Activated CD8-positive, alpha-beta T cell treated with anti-CD3 and anti-CD28 coated beads for 36 hours (primary cell): ENCODE measurements at regions of chr3 and their contacts with region 1.

Region 1: GRCh38 chr3:184777336-184778004 is 34.5 kb upstream of the VPS8 start:
- DNase-seq: peak; percentile 96
- ATAC-seq: peak; percentile 99
- H3K4me3 Mint-ChIP-seq: no peak overlapping the region
- H3K27ac Mint-ChIP-seq: no peak overlapping the region
- H3K4me1 Mint-ChIP-seq: no peaks in the 10 kb centered on the region
- H3K27me3 Mint-ChIP-seq: peaks cover 15% of the 10 kb centered on the region
- CTCF ChIP-seq: peak; percentile 74

Region 2: DNA sequence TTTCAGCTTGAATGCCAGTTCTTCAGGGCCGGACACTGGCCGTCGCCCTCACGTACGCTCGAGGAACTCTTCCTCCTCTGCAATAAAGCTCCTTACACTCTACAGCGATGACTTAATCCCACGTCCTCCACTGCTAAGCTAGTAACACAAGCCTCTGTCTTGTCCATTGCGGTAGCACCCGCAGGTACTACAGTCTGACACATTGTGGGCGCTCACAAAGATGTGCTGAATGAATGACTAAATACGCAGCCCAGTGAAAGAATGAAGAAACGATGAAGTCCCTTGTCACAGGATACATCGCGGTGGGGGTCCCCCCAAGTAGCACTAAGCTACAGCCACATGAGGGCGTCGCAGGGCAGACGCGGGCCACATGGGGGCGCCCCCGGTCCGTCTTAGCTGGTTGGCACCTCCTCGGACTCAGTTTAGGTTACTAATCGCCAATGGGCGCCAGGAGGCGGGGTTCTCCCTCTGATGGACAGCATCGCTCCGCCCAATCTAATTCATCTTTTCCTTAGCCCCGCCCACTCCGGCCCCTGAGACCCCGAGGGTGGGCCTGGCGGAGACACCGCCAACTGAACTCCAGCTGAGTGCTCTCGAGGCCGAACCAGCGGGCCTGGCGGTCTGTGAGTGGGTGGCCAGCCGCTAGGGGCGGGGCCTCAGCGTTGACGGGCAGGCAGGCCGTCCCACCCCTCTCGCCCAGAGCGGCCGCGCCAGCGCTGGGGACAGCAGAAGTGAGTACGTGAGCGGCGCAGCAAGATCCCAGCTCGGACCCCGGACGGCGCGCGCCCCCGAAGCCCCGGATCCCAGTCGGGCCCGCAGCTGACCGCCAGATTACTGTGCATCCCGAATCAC is 216.2 kb before region 1 on chr3 and contains the start of gene EPHB3:
- CTCF ChIA-PET with region 1: interaction called, 12 read pairs
- POLR2A ChIA-PET with region 1: interaction called, 3 read pairs
- intact Hi-C with region 1: loop called (anchors 1 kb)
- DNase-seq: peak; percentile 99
- ATAC-seq: peak; percentile 92
- H3K4me3 Mint-ChIP-seq: peak within 1 kb of the TSS; percentile 50
- H3K27ac Mint-ChIP-seq: peak within 1 kb of the TSS; percentile 32
- H3K4me1 Mint-ChIP-seq: peaks cover 23% of the 10 kb centered on the region
- H3K27me3 Mint-ChIP-seq: peaks cover 23% of the 10 kb centered on the region
- CTCF ChIP-seq: peak; percentile 93
- total RNA-seq, gene EPHB3: 0.07 TPM in 1 of 2 experiments, not detected in the other

Region 3: GRCh38 chr3:184592371-184593219 is 184.9 kb before region 1 on chr3:
- CTCF ChIA-PET with region 1: no interaction called
- POLR2A ChIA-PET with region 1: no interaction called
- intact Hi-C with region 1: no loop called
- DNase-seq: no peak
- ATAC-seq: no peak
- H3K4me3 Mint-ChIP-seq: no peak overlapping the region
- H3K27ac Mint-ChIP-seq: no peak overlapping the region
- H3K4me1 Mint-ChIP-seq: no peaks in the 10 kb centered on the region
- H3K27me3 Mint-ChIP-seq: no peaks in the 10 kb centered on the region
- CTCF ChIP-seq: no peak

Region 4: GRCh38 chr3:184727357-184728009 is 50.0 kb before region 1 on chr3:
- CTCF ChIA-PET with region 1: interaction called, 11 read pairs
- POLR2A ChIA-PET with region 1: no interaction called
- intact Hi-C with region 1: no loop called
- DNase-seq: peak; percentile 70
- ATAC-seq: peak; percentile 87
- H3K4me3 Mint-ChIP-seq: no peak overlapping the region
- H3K27ac Mint-ChIP-seq: no peak overlapping the region
- H3K4me1 Mint-ChIP-seq: no peaks in the 10 kb centered on the region
- H3K27me3 Mint-ChIP-seq: peaks cover 10% of the 10 kb centered on the region
- CTCF ChIP-seq: peak; percentile 66

Region 5: GRCh38 chr3:184805351-184806038 is 28.0 kb after region 1 on chr3:
- CTCF ChIA-PET with region 1: interaction called, 15 read pairs
- POLR2A ChIA-PET with region 1: no interaction called
- intact Hi-C with region 1: no loop called
- DNase-seq: no peak
- ATAC-seq: no peak
- H3K4me3 Mint-ChIP-seq: no peak overlapping the region
- H3K27ac Mint-ChIP-seq: no peak overlapping the region
- H3K4me1 Mint-ChIP-seq: peaks cover 3% of the 10 kb centered on the region
- H3K27me3 Mint-ChIP-seq: peaks cover 11% of the 10 kb centered on the region
- CTCF ChIP-seq: no peak